Tibial artery (tissue), 4 donors: ENCODE measurements at regions of chr3 and their contacts with region 1.

Region 1: DNA sequence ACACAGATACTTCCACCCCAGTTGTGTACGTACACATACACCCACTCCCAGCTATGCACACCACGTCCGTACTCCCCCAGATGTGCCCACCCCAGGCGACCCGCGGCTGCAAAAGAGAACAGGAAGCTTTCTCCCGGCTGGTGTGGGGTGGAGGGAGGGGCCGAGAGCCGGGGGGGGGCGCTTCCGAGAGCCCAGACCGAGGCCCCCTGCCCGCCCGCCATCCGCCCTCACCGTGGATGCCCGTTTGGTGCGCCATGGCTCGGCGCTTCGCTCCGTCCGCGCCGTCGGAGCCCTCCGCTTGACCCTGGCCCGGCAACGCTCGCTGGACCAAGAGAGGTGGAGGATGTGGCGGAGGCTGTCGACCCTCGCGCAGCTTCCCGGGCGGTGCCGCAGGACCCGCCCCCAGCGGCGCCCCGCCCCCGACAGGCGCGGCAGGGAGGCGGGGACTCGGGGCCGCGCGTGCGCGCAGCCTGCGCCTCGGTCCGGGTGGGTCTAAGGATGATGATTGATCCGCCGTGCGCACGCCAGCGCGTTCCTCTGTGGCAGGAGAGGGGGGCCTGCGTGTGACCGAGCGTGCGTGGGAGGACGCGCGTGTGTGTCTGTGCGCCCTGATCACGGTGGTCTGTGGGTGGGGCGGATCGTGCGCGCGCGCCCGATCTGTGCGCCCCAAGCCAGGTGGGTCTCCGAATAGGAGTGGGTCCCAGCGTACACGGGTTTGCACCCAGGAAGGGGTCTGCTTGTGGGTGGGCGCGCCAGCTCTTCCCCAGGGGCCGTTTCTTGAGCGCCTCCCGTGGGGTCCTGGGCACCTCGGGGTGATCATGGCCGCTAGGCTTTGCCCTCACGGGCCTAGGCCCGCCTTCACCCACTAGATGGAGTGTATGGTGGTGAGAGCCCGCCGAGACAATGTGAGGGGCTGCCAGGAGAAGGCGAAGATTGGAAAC is at the start of gene TWF2:
- DNase-seq: peak; percentile 68 to 87
- H3K4me3 ChIP-seq: peak within 1 kb of the TSS; percentile 82 to 94
- H3K27ac ChIP-seq: peak within 1 kb of the TSS; percentile 80 to 94
- H3K4me1 ChIP-seq: peaks cover 0 to 52% (median 37%) of the 10 kb centered on the region in 4 donors
- H3K27me3 ChIP-seq: no peaks in the 10 kb centered on the region
- CTCF ChIP-seq: peak; percentile 30 to 45

Region 2: GRCh38 chr3:52278510-52279069 is 39.6 kb after region 1 on chr3 and contains the start of gene WDR82:
- intact Hi-C with region 1: loop called (anchors 2 kb)
- DNase-seq: peak; percentile 95 to 98
- H3K4me3 ChIP-seq: peak within 1 kb of the TSS; percentile 87 to 95
- H3K27ac ChIP-seq: peak within 1 kb of the TSS; percentile 96 to 99
- H3K4me1 ChIP-seq: peaks cover 0 to 64% (median 45%) of the 10 kb centered on the region in 4 donors
- H3K27me3 ChIP-seq: no peaks in the 10 kb centered on the region
- CTCF ChIP-seq: peak; percentile 41 to 42

Region 3: DNA sequence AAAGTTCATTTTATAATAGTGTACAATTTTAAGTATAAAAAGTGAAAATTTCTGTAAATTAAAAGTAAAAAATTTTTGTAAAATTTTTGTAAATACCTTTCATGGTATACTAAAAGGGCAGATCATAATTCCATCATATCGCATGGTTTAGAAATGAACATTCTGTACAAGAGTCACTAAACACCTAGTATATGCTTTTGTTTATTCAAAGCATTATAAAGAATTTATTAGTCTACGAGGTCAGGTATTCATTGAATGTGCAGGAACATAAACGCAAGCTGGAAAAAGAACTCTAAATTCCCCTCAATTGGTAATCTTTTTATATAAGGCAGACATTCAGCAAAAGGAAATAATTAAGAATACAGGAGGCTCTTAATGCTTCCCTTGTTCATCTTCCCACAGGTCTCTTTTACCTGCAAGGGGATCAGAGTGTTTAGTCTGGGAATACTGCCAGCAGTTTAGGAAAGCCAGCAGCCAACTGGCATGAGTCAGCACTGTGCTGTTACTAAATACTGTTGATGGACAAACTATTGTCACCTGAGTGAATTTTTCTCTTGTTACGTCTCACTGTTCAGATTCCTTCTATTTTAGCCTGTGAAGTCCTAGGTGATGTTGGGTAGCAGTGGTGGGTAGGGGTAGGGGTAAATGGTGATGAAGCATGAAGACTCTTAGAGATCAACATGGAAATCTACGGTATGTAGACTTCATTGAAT is 367.5 kb after region 1 on chr3:
- intact Hi-C with region 1: no loop called
- DNase-seq: no peak
- H3K4me3 ChIP-seq: no peak overlapping the region
- H3K27ac ChIP-seq: no peak overlapping the region
- H3K4me1 ChIP-seq: peaks cover 0 to 7% (median 2%) of the 10 kb centered on the region in 4 donors
- H3K27me3 ChIP-seq: no peaks in the 10 kb centered on the region
- CTCF ChIP-seq: no peak